ENCODE measurements at regions of chr5 and their contacts with region 1.

Region 1: DNA sequence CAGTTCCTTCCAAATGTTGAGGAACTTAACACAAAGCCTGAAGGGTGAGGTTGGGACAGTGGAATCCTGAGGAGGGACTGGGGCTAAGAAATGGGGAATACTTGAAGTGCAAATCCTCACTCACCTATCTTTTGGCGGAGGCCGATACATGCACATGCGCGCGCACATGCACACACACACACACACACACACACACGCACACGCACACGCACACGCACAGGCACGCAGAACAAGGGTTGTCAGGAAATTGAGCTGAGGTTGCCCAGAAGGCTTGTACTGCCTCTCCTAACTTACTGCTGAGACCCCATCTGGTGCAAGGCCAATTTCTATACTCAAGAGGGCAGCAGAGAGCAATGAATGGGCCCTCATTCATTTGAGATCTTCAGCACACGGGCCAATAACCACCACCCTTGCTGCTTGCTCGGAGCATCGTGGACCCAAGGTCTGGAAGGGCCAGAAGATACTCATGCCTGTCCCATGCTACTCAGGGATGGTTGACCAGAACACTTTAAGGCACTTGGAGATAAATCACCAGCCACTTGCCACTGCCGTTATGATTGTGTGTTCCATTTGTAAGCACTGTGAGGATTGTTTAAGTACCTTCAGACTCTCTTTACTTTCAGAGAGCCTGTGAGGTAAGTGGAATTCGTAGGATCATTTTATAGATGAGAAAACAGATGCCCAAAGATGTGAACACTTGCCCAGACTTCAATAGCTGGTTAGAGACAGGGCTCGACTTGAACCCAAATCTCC is 21.5 kb downstream of the BTF3 start:
- DNase-seq: peak; percentile 13 to 63
- ATAC-seq: peak; percentile 76 to 95 (median 90)
- H3K4me3 ChIP-seq: no peak overlapping the region
- H3K27ac ChIP-seq: no peak overlapping the region
- H3K4me1 ChIP-seq: peaks cover 0 to 7% (median 0%) of the 10 kb centered on the region in 9 donors
- H3K27me3 ChIP-seq: peaks cover 0 to 5% (median 0%) of the 10 kb centered on the region in 7 donors
- CTCF ChIP-seq: peak; percentile 47 to 78 (median 66)

Region 2: GRCh38 chr5:73126381-73126780 is 393.3 kb before region 1 on chr5:
- intact Hi-C with region 1: no loop called
- DNase-seq: no peak
- ATAC-seq: peak in 1 of 8 donors; percentile 29
- H3K4me3 ChIP-seq: no peak overlapping the region
- H3K27ac ChIP-seq: no peak overlapping the region
- H3K4me1 ChIP-seq: peaks cover 0 to 11% (median 0%) of the 10 kb centered on the region in 9 donors
- H3K27me3 ChIP-seq: peaks cover 0 to 58% (median 35%) of the 10 kb centered on the region in 7 donors
- CTCF ChIP-seq: no peak

Region 3: DNA sequence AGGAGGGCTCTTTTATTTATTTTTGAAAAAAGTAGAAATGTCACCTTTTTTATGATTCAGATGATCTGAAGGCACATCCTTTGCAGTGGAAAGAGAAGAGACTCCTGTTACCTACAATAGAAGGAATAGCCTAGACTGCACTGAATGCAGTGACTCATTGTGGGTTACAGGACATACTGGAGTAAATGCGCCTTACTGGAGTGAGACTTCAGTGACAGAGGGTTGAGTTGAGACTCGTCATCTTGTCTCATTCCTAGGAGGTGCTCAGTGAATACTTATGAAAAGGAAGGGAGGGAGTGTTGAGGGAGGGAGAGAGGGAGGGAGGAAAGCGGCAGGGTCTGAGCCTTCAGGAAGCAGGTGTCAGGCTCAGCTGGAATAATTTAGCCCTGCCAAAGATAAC is 20.5 kb after region 1 on chr5:
- intact Hi-C with region 1: loop called in 4 of 10 experiments (anchors 1 to 2 kb)
- DNase-seq: no peak
- ATAC-seq: no peak
- H3K4me3 ChIP-seq: no peak overlapping the region
- H3K27ac ChIP-seq: no peak overlapping the region
- H3K4me1 ChIP-seq: peaks cover 0 to 7% (median 0%) of the 10 kb centered on the region in 9 donors
- H3K27me3 ChIP-seq: peaks cover 0 to 17% (median 5%) of the 10 kb centered on the region in 7 donors
- CTCF ChIP-seq: no peak

Region 4: DNA sequence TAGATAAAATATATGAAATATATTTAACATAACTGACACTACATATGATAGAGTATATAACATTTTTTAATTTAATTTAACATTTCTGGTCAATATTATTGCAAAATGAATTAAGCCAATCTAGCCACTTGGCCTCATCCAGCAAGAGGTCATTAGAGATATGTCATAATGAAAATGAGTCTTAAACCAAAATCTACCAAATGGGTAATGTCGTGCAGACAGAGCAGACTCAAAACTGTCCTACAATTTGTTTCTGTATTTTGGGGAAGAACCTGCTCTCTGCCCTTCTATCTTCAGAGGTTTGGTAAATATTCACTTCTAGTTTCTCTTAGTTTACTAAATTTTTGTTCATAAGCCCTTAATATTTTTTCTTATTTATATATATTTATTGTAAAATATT is 167.7 kb after region 1 on chr5:
- intact Hi-C with region 1: no loop called
- DNase-seq: no peak
- ATAC-seq: no peak
- H3K4me3 ChIP-seq: no peak overlapping the region
- H3K27ac ChIP-seq: no peak overlapping the region
- H3K4me1 ChIP-seq: no peaks in the 10 kb centered on the region
- H3K27me3 ChIP-seq: no peaks in the 10 kb centered on the region
- CTCF ChIP-seq: no peak